ENCODE measurements at regions of chr7 and their contacts with region 1.

Region 1: GRCh38 chr7:100852048-100852872 is at the start of gene SLC12A9:
- DNase-seq: peak; percentile 75 to 94 (median 88)
- H3K4me3 ChIP-seq: peak within 1 kb of the TSS; percentile 45 to 92 (median 82)
- H3K27ac ChIP-seq: peak within 1 kb of the TSS in 56 of 59 donors; percentile 9 to 90 (median 82)
- H3K27me3 ChIP-seq: no peaks in the 10 kb centered on the region
- CTCF ChIP-seq: peak; percentile 63 to 97 (median 93)
- total RNA-seq, gene SLC12A9: 15.8 to 54.2 (median 30.1) TPM

Region 2: DNA sequence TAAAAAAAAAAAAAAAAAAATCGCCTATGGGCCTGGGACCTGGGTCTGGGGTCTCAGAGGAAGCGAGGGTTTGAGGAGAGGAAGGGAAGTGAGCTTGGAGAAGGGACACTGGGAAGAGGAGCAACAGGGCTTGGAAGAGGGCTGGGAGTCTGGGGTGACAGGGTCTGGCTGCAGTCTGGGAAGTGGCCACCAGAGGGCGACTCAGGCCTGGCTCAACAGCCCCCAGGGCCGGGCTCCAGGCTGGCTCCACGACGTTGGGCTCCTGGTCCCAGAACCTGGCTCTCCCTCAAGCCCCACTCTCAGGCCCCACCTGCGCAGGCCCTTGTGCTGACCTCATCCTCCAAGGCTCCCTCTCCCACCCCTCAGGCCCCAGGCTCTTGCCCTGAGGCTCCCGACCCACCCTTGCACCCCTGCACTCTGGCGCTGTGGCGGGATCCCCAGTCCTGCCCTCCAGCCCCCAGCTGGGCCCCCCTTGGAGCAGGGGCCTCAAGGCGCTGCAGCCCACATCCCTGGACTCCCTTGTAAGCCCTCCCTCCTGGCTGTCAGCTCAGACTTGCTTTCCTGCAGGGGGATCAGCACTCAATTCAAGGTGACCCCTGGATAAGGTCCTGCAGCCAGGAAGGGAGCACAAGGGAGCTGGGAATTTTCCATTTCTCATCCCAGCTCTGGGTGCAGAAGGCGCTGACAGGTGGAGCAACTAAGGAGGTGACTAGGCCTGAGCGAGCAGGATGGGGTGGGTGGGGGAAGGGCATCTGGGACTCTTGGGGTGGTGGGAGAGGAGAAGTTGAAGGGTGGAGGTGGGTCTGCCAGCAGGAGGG is 382.8 kb before region 1 on chr7:
- intact Hi-C with region 1: loop called in 1 of 2 experiments (anchors 10 kb)
- DNase-seq: peak; percentile 85 to 93 (median 90)
- H3K4me3 ChIP-seq: peak overlapping the region in 2 of 59 donors; percentile 16 to 21
- H3K27ac ChIP-seq: peak overlapping the region in 53 of 59 donors; percentile 31 to 100 (median 97)
- H3K27me3 ChIP-seq: no peaks in the 10 kb centered on the region
- CTCF ChIP-seq: peak; percentile 81 to 99 (median 94)

Region 3: GRCh38 chr7:100478966-100479665 is 373.1 kb before region 1 on chr7 and contains the start of gene TSC22D4:
- intact Hi-C with region 1: loop called in 1 of 2 experiments (anchors 10 kb)
- DNase-seq: peak; percentile 85 to 97 (median 96)
- H3K4me3 ChIP-seq: peak within 1 kb of the TSS; percentile 74 to 100 (median 95)
- H3K27ac ChIP-seq: peak within 1 kb of the TSS; percentile 55 to 98 (median 94)
- H3K27me3 ChIP-seq: no peaks in the 10 kb centered on the region
- CTCF ChIP-seq: peak in 25 of 56 donors; percentile 3 to 49 (median 24)
- total RNA-seq, gene TSC22D4: 142 to 595 (median 270) TPM

Region 4: GRCh38 chr7:100705753-100706671 is 146.2 kb before region 1 on chr7 and contains the start of gene POP7:
- intact Hi-C with region 1: loop called (anchors 2 to 5 kb)
- DNase-seq: peak; percentile 94 to 97 (median 96)
- H3K4me3 ChIP-seq: peak within 1 kb of the TSS; percentile 62 to 100 (median 88)
- H3K27ac ChIP-seq: peak within 1 kb of the TSS; percentile 21 to 98 (median 92)
- H3K27me3 ChIP-seq: no peaks in the 10 kb centered on the region
- CTCF ChIP-seq: peak in 5 of 56 donors; percentile 2 to 31 (median 20)
- total RNA-seq, gene POP7: 20.7 to 61.9 (median 42.4) TPM

Region 5: GRCh38 chr7:100803398-100804233 is 48.6 kb before region 1 on chr7:
- intact Hi-C with region 1: loop called (anchors 2 kb)
- DNase-seq: peak; percentile 34 to 82 (median 68)
- H3K4me3 ChIP-seq: peak overlapping the region in 28 of 59 donors; percentile 1 to 44 (median 24)
- H3K27ac ChIP-seq: peak overlapping the region in 8 of 59 donors; percentile 11 to 55 (median 38)
- H3K27me3 ChIP-seq: peaks cover 0 to 3% (median 0%) of the 10 kb centered on the region in 45 donors
- CTCF ChIP-seq: no peak

Region 6: DNA sequence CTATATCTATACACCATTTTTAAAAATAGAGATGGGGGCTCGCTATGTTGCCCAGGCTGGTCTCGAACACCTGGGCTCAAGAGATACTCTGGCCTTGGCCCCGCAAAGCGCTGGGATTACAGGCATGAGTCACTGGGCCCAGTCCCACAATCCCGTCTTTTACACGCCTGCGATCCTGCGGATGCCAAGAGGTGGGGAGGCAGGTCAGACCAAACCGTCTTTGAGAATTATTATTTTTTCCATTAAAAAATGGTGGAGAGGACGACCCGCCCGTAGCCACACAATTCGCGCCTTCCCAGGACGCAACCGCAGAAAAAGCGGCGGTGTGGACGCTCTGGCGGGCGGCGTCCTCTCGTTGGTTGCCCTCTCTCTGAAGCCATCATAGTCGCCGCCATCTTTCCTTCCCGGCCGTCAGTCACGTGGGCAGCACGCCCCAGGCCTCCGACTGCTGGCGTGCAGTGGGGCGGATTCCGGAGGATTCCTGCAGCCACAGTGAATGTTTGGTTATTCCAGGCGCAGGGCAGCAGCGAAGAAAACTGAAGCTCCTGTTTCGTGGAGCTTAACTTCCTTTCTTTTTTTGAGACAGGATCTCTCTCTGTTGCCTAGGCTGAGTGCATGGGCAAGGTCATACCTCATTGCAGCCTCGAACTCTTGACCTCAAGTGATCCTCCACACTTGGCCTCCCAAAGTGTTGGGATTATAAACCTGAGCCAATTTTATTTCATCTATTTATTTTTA is 15.0 kb before region 1 on chr7:
- intact Hi-C with region 1: loop called in 1 of 2 experiments (anchors 2 kb)
- DNase-seq: peak; percentile 88 to 95 (median 92)
- H3K4me3 ChIP-seq: peak overlapping the region; percentile 24 to 77 (median 62)
- H3K27ac ChIP-seq: peak overlapping the region; percentile 18 to 96 (median 86)
- H3K27me3 ChIP-seq: no peaks in the 10 kb centered on the region
- CTCF ChIP-seq: peak in 50 of 56 donors; percentile 4 to 68 (median 39)

Measured in dorsolateral prefrontal cortex (tissue), 120 donors.